Ovary (tissue), 10 donors: ENCODE measurements at regions of chrX and their contacts with region 1.

Region 1: GRCh38 chrX:41333744-41334259 is at the start of gene DDX3X:
- DNase-seq: peak; percentile 91 to 95 (median 92)
- H3K4me3 ChIP-seq: peak within 1 kb of the TSS; percentile 84
- H3K27ac ChIP-seq: peak within 1 kb of the TSS; percentile 98 to 100
- H3K4me1 ChIP-seq: no peaks in the 10 kb centered on the region
- H3K27me3 ChIP-seq: no peaks in the 10 kb centered on the region
- CTCF ChIP-seq: peak in 2 of 3 donors; percentile 74 to 77
- EP300 ChIP-seq: no peak
- POLR2A ChIP-seq: peak; percentile 99
- total RNA-seq, gene DDX3X: 178 to 329 (median 275) TPM

Region 2: DNA sequence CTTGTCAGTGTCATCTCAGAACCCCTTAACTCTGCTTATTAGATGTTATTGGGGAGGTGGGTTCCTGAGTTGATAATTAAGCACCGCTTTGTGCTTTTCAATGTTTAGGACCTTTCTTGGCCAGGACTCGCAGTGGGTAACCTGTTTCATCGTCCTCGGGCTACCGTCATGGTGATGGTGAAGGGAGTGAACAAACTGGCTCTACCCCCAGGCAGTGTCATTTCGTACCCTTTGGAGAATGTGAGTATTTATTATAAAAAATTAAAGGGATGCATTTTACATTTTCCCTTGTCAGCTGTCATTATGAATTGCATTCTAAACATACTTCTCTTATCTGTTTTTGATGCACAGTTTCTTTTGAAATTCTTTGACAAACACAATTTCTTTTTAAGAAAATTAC is 742.7 kb before region 1 on chrX:
- intact Hi-C with region 1: no loop called
- DNase-seq: no peak
- H3K4me3 ChIP-seq: no peak overlapping the region
- H3K27ac ChIP-seq: no peak overlapping the region
- H3K4me1 ChIP-seq: no peaks in the 10 kb centered on the region
- H3K27me3 ChIP-seq: peaks cover 4% of the 10 kb centered on the region
- CTCF ChIP-seq: no peak
- EP300 ChIP-seq: no peak
- POLR2A ChIP-seq: no peak

Region 3: DNA sequence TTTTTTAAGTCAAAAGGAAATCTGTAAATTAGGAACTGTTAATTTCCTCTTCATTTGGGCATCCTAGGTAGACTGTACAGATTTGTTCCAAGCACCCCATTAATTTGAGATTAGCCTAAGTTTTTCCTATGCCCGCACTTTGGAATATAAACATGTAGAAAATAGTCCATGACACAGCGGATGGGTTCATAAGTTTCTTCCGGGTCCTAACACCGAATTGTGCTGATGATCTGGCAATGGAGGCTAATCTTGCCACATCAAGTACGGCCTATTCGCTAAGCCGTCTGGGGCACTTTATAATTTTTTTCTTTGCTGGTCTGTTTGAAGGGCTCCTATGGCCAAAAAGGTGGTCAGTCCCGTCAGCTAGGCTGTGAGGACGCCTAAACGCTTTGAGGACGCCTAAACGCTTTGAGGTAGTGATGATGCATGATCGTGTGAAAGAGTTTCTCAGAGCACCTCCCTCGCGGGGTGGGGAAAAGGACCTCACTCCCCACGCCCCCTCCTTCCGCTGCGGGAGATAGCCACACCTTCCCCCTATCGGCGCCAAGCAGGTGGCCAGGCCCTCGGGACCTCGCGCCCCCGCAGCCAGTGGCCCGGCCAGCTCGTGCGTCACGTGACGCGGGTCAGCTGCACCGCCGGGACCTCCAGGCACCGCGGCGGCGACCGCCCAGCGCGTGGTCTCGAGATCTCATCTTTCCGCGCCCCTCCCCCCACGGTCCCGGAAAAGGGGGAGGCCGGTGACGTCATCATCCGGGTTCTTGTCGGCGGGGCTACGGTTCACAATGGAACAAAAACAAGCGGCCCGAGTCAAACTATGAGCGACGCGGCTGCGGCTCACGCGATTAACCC is 249.5 kb before region 1 on chrX:
- intact Hi-C with region 1: loop called in 1 of 4 experiments (anchors 10 kb)
- DNase-seq: peak; percentile 99 to 100 (median 100)
- H3K4me3 ChIP-seq: peak overlapping the region; percentile 74
- H3K27ac ChIP-seq: peak overlapping the region; percentile 97 to 98
- H3K4me1 ChIP-seq: no peaks in the 10 kb centered on the region
- H3K27me3 ChIP-seq: no peaks in the 10 kb centered on the region
- CTCF ChIP-seq: peak in 1 of 3 donors; percentile 28
- EP300 ChIP-seq: peak; percentile 97
- POLR2A ChIP-seq: peak; percentile 57

Region 4: DNA sequence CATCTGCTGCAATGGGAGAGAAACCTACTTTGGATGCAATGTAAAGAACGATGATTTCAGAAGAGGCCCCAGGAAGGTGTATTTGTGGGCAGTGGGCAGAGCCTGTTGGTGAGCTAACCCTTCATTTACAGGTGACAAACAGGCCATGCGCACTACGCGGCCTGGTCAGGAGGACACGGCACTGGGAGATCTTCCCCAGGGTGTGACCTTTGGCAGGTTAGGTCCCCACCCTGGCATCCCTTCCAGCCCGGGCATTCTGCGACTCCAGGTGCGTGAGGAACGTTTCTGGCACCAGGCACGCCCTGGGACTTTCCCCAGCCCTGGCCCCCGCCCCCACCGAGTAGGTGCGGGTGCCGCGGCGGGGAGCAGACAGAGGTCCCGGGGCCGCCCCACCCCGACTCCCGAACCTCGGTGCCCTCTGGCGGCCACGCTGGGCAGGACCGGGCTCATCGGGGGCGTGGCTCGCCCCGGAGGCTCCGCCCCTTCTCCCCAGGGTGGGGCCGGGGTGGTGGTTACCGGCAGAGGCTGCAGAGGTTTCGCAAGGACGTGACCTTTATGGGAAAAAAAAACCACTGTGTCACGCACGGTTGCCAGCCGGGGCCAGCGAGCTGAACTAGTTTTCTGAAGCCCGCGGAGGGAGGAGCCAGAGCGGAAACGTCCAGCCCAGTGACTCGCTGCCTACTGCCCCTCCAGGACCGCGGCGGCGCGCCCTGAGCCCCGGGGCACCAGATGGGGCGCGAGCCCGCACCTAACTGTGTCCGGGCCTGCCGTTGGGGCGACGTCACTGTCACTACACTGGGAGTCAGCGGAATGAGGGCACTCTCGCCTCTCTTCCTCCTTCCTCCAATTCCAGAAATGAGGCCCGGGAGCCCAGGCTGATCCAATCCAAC is 108.4 kb after region 1 on chrX:
- intact Hi-C with region 1: loop called in 1 of 4 experiments (anchors 5 kb)
- DNase-seq: peak; percentile 76 to 86 (median 81)
- H3K4me3 ChIP-seq: peak overlapping the region; percentile 29
- H3K27ac ChIP-seq: no peak overlapping the region
- H3K4me1 ChIP-seq: no peaks in the 10 kb centered on the region
- H3K27me3 ChIP-seq: no peaks in the 10 kb centered on the region
- CTCF ChIP-seq: peak; percentile 26 to 57 (median 43)
- EP300 ChIP-seq: peak; percentile 56
- POLR2A ChIP-seq: no peak